Heart right ventricle (tissue), 16 donors: ENCODE measurements at regions of chr12 and their contacts with region 1.

Region 1: GRCh38 chr12:128783129-128783574 is 40.6 kb downstream of the SLC15A4 start:
- DNase-seq: no peak
- ATAC-seq: no peak
- H3K4me3 ChIP-seq: no peak overlapping the region
- H3K27ac ChIP-seq: no peak overlapping the region
- H3K4me1 ChIP-seq: peaks cover 0 to 9% (median 0%) of the 10 kb centered on the region in 9 donors
- H3K27me3 ChIP-seq: no peaks in the 10 kb centered on the region
- CTCF ChIP-seq: no peak

Region 2: GRCh38 chr12:128951448-128951847 is 168.3 kb after region 1 on chr12:
- intact Hi-C with region 1: loop called in 1 of 10 experiments (anchors 10 kb)
- DNase-seq: no peak
- ATAC-seq: no peak
- H3K4me3 ChIP-seq: no peak overlapping the region
- H3K27ac ChIP-seq: no peak overlapping the region
- H3K4me1 ChIP-seq: no peaks in the 10 kb centered on the region
- H3K27me3 ChIP-seq: peaks cover 0 to 5% (median 3%) of the 10 kb centered on the region in 7 donors
- CTCF ChIP-seq: no peak

Region 3: DNA sequence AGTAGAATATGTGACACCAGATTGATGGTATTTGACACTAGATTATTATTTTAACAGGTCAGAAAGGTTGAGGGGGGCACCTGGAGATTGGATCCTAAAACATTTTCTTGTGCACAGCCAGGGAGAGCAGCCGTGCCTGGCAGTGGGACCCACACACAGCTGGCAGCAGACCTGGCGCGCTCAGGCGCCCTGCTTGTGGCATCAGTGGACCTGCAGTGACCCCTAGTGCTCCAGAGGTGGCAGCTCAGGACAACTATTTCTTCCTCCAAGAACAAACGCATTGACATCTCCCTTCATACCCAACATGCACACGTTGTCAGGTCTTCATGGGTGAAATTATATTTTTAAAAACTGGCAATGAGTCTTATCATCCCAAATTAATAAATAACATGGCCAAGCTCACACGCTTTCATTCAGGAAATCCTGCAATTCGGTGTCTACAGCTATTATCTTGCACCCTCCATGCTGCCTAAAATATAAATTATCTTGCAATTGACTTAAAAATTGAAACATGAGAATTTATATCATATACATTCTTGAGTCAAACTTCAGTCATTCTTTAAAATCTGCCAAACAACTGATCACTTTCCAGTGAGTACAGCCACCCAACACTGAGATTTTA is 1128.4 kb after region 1 on chr12:
- intact Hi-C with region 1: loop called in 1 of 10 experiments (anchors 5 kb)
- DNase-seq: peak; percentile 12 to 22
- ATAC-seq: peak in 5 of 8 donors; percentile 58 to 84 (median 73)
- H3K4me3 ChIP-seq: no peak overlapping the region
- H3K27ac ChIP-seq: no peak overlapping the region
- H3K4me1 ChIP-seq: no peaks in the 10 kb centered on the region
- H3K27me3 ChIP-seq: peaks cover 0 to 61% (median 23%) of the 10 kb centered on the region in 7 donors
- CTCF ChIP-seq: peak; percentile 18 to 71 (median 61)